H1 (cell line): ENCODE measurements at regions of chr12 and their contacts with region 1.

Region 1: DNA sequence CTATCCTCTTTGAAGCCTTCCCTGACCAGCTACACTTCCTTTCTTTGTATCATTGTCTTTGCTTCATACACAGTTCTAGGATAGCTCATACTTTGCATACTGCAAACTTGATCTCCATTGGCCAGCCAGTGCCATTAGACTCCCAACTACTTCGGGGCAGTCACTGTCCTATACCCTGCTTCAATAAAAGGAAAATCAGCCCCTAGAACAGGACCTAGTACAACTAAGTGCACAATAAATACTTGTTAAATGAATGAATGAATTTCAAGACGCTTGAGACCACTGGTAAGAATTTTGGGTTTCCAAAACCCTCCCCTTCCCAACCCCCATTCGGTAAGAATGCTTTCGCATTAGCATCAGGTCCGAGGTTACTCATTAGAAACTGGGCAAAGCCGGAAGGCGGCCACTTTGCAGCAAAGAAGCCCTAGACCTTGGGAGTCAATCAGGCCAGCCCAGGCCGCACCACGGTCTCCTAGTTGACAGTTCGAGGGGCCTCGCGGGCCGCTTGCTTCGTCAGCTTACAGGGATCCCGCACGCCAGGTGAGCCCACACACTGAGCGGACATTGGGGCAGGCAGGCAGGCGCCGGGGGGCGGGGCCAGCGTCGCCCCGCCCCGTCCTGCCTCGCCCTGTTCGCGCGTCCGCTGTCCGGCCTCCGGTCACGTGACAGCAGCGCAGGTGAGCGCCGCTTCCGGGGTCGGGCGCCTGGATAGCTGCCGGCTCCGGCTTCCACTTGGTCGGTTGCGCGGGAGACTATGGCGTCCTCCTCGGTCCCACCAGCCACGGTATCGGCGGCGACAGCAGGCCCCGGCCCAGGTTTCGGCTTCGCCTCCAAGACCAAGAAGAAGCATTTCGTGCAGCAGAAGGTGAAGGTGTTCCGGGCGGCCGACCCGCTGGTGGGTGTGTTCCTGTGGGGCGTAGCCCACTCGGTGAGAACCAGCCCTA is at the start of gene PIP4K2C:
- DNase-seq: peak; percentile 81 to 90
- H3K4me3 ChIP-seq: peak within 1 kb of the TSS; percentile 72 to 95 (median 80)
- H3K27ac ChIP-seq: peak within 1 kb of the TSS; percentile 26; the same call in 1 of the 2 replicates
- H3K4me1 ChIP-seq: peaks cover 2 to 7% (median 3%) of the 10 kb centered on the region in 4 experiments; a peak in 6 of 7 replicates
- H3K27me3 ChIP-seq: no peaks in the 10 kb centered on the region
- CTCF ChIP-seq: no peak; a peak in 1 of 4 replicates
- EP300 ChIP-seq: no peak
- POLR2A ChIP-seq: peak; percentile 42 to 67
- RAD21 ChIP-seq: no peak; a peak in 1 of 4 replicates
- total RNA-seq, gene PIP4K2C: 21.4 and 27.1 TPM in 2 replicates

Region 2: DNA sequence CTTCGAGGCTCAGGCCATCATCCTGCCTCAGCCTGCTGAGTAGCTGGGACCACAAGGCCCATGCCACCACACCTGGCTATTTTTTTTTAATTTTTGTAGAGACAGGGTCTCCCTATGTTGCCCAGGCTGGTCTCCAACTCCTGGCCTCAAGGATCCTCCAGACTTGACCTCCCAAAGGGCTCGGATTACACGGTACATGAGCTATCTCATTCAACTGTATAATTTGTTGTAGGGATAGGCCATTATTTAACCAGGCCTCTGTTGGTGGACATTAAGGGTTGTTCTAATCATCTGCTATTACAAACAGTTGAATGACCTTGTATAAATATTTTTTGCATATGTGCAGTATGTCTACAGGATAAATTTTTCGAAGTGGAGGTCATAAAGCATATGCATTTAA is 31.9 kb before region 1 on chr12:
- CTCF ChIA-PET with region 1: no interaction called
- POLR2A ChIA-PET with region 1: no interaction called
- DNase-seq: no peak
- H3K4me3 ChIP-seq: no peak overlapping the region
- H3K27ac ChIP-seq: no peak overlapping the region
- H3K4me1 ChIP-seq: no peaks in the 10 kb centered on the region
- H3K27me3 ChIP-seq: no peaks in the 10 kb centered on the region
- CTCF ChIP-seq: no peak
- EP300 ChIP-seq: no peak
- POLR2A ChIP-seq: no peak
- RAD21 ChIP-seq: no peak

Region 3: DNA sequence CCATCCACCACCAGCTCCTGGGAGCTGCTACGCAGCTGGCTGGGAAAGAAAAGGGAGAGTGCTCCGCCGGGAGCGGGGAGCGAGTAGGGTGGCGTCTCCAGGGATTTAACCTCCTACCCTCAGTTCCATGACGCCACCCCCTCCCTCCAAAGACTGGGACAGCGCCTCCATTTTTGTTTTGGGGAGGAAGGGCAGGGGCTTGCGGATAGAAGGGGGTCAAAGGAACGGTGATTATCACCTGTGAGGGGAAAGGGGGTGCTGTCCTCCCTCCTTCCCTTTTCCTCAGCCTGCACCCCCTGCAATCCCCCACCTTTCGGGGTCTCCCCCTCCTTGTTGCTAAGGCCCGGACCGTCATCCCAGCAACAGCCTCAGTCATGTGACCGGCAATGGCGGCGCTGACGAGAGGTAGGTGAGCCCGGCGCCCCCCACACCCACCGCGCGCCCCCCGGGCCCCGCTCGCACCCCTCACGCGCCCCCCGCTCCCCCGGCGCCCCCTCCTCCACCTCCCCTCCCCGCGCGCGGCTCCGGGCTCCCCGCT is 13.7 kb after region 1 on chr12 and contains the start of gene DTX3:
- CTCF ChIA-PET with region 1: interaction called, 124 read pairs
- POLR2A ChIA-PET with region 1: interaction called, 60 read pairs
- DNase-seq: peak in 1 of 2 experiments; percentile 70
- H3K4me3 ChIP-seq: peak within 1 kb of the TSS; percentile 53 to 84 (median 78)
- H3K27ac ChIP-seq: peak within 1 kb of the TSS; percentile 93
- H3K4me1 ChIP-seq: peaks cover 7 to 11% (median 9%) of the 10 kb centered on the region in 4 experiments
- H3K27me3 ChIP-seq: 0 out of 7 replicates have a peak, but pooled peaks cover 0 to 4% (median 0%) of the 10 kb centered on the region in 4 experiments
- CTCF ChIP-seq: no peak
- EP300 ChIP-seq: no peak
- POLR2A ChIP-seq: peak in 1 of 2 experiments; percentile 18; a peak in 1 of 3 replicates
- RAD21 ChIP-seq: no peak
- total RNA-seq, gene DTX3: 41.8 and 43.4 TPM in 2 replicates

Region 4: GRCh38 chr12:57666897-57667296 is 76.1 kb after region 1 on chr12:
- CTCF ChIA-PET with region 1: no interaction called
- POLR2A ChIA-PET with region 1: no interaction called
- DNase-seq: no peak
- H3K4me3 ChIP-seq: no peak overlapping the region
- H3K27ac ChIP-seq: no peak overlapping the region
- H3K4me1 ChIP-seq: no peaks in the 10 kb centered on the region
- H3K27me3 ChIP-seq: no peaks in the 10 kb centered on the region
- CTCF ChIP-seq: no peak
- EP300 ChIP-seq: no peak
- POLR2A ChIP-seq: no peak
- RAD21 ChIP-seq: no peak